Naive thymus-derived CD4-positive, alpha-beta T cell (primary cell): ENCODE measurements at regions of chr5 and their contacts with region 1.

Region 1: DNA sequence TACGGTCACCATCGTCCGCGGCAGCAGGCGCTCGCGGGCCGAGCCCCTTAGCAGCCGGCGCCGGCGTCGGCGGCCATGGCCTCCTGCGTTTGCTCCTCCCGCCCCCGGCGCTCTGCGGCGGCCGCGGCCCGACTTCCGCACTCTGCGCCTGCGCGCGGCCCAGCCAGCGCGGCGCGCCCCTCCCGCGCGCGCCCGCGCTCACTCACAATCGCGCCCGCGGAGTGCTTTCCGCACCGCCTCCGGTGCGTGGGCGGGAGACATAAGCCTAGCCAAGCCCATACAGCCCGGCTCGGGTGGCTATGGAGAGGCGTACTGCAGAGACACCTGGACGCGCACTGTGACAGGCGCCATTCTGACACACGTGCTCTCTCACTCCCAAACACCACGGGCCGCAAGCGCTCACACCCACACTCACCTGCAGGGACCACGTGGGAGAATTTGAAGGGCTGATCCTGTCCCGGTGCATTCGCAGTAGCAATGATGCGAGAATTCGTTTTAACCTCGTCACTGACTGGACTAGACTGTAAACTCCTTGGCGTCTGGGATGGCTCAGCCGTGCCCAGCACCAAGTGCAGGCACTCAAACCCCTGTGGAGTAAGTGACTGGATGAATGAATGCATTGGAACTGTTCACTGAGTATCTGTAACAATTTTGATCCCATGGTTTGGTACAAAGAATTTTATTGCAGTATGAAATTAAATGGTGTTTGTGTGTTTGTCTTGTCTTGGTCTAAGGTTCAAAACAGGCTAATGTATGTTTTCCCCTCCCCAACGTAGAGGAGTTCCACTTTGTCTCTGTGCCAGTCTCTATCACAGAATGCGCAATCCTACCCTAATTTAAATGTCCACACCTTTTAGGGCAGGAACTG is at the start of gene RNF145:
- DNase-seq: peak; percentile 93 to 96 (median 94)
- ATAC-seq: peak; percentile 89
- H3K4me3 ChIP-seq: peak within 1 kb of the TSS; percentile 90
- H3K4me3 Mint-ChIP-seq: peak within 1 kb of the TSS; percentile 95 to 99 (median 96)
- H3K27ac ChIP-seq: peak within 1 kb of the TSS; percentile 88
- H3K27ac Mint-ChIP-seq: peak within 1 kb of the TSS; percentile 91 to 99 (median 97)
- H3K4me1 ChIP-seq: peaks cover 17 to 31% of the 10 kb centered on the region in 2 donors
- H3K4me1 Mint-ChIP-seq: peaks cover 44 to 64% (median 54%) of the 10 kb centered on the region in 7 donors
- H3K27me3 ChIP-seq: no peaks in the 10 kb centered on the region
- H3K27me3 Mint-ChIP-seq: no peaks in the 10 kb centered on the region
- total RNA-seq, gene RNF145: 51.8 to 142 (median 70.6) TPM

Region 2: GRCh38 chr5:157858527-157859226 is 1351.0 kb before region 1 on chr5 and contains the start of gene CLINT1:
- CTCF ChIA-PET with region 1: no interaction called
- POLR2A ChIA-PET with region 1: interaction called, 3 read pairs
- intact Hi-C with region 1: loop called (anchors 2 kb)
- DNase-seq: peak; percentile 78 to 86 (median 84)
- ATAC-seq: peak; percentile 96
- H3K4me3 ChIP-seq: peak within 1 kb of the TSS; percentile 96
- H3K4me3 Mint-ChIP-seq: peak within 1 kb of the TSS; percentile 88 to 99 (median 96)
- H3K27ac ChIP-seq: peak within 1 kb of the TSS; percentile 85
- H3K27ac Mint-ChIP-seq: peak within 1 kb of the TSS; percentile 94 to 99 (median 96)
- H3K4me1 ChIP-seq: peaks cover 7 to 13% of the 10 kb centered on the region in 2 donors
- H3K4me1 Mint-ChIP-seq: peaks cover 51 to 83% (median 78%) of the 10 kb centered on the region in 7 donors
- H3K27me3 ChIP-seq: no peaks in the 10 kb centered on the region
- H3K27me3 Mint-ChIP-seq: no peaks in the 10 kb centered on the region
- total RNA-seq, gene CLINT1: 58.8 to 94.2 (median 74.0) TPM

Region 3: DNA sequence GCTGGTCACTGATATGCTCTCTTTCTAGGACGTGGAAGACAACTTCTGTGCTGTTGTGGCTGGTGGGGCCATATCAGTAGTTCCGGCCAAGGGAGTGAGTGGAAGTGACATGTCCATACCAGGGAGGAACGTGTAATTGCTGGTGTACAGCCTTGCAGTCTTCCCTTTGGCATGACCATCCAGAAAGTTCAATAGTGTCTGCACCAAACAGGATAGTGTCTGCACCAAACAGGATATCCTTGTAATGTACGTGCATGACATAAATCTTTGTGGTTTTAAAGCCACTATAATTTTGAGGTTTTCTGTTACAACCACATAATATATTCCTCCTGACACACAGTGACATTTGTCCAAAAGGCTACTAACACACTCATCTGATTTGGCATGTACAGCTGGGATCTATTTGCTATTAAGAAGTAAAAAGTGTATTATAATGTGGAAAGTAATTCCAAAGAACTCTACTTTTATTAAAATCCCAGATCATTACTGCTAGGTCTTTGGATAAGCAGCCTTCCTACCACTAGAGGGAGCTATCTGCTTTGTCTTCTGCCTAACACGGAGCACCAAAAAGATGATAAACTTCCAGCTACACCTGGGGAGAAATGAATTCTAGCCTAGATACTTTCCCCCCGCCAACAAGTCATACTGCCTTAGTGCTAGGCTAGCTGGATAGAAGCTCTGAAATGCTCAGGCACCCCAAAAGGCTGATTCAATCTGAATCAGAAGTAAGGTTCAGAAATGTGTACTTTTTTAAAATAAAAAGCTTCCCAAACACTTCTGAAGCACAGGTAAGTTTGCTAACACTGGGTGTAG is 53.0 kb before region 1 on chr5:
- CTCF ChIA-PET with region 1: interaction called, 8 read pairs
- POLR2A ChIA-PET with region 1: interaction called, 13 read pairs
- intact Hi-C with region 1: loop called (anchors 1 to 2 kb)
- DNase-seq: peak in 7 of 9 donors; percentile 53 to 77 (median 72)
- ATAC-seq: peak; percentile 89
- H3K4me3 ChIP-seq: no peak overlapping the region
- H3K4me3 Mint-ChIP-seq: peak overlapping the region in 1 of 10 donors; percentile 50
- H3K27ac ChIP-seq: peak overlapping the region; percentile 16
- H3K27ac Mint-ChIP-seq: peak overlapping the region; percentile 26 to 92 (median 85)
- H3K4me1 ChIP-seq: peaks cover 8 to 9% of the 10 kb centered on the region in 2 donors
- H3K4me1 Mint-ChIP-seq: peaks cover 0 to 35% (median 23%) of the 10 kb centered on the region in 7 donors
- H3K27me3 ChIP-seq: no peaks in the 10 kb centered on the region
- H3K27me3 Mint-ChIP-seq: no peaks in the 10 kb centered on the region

Region 4: GRCh38 chr5:159241946-159242552 is 32.4 kb after region 1 on chr5:
- CTCF ChIA-PET with region 1: interaction called, 3 read pairs
- POLR2A ChIA-PET with region 1: no interaction called
- intact Hi-C with region 1: loop called in 1 of 2 experiments (anchors 2 kb)
- DNase-seq: no peak
- ATAC-seq: no peak
- H3K4me3 ChIP-seq: no peak overlapping the region
- H3K4me3 Mint-ChIP-seq: peak overlapping the region in 7 of 10 donors; percentile 2 to 64 (median 32)
- H3K27ac ChIP-seq: no peak overlapping the region
- H3K27ac Mint-ChIP-seq: peak overlapping the region in 2 of 9 donors; percentile 15 to 53
- H3K4me1 ChIP-seq: peaks cover 0 to 14% of the 10 kb centered on the region in 2 donors
- H3K4me1 Mint-ChIP-seq: peaks cover 8 to 36% (median 25%) of the 10 kb centered on the region in 7 donors
- H3K27me3 ChIP-seq: no peaks in the 10 kb centered on the region
- H3K27me3 Mint-ChIP-seq: peaks cover 0 to 6% (median 4%) of the 10 kb centered on the region in 5 donors

Region 5: GRCh38 chr5:159336991-159337955 is 127.6 kb after region 1 on chr5:
- CTCF ChIA-PET with region 1: no interaction called
- POLR2A ChIA-PET with region 1: no interaction called
- intact Hi-C with region 1: loop called in 1 of 2 experiments (anchors 2 kb)
- DNase-seq: peak in 8 of 9 donors; percentile 17 to 43 (median 34)
- ATAC-seq: peak; percentile 74
- H3K4me3 ChIP-seq: no peak overlapping the region
- H3K4me3 Mint-ChIP-seq: peak overlapping the region; percentile 20 to 73 (median 55)
- H3K27ac ChIP-seq: peak overlapping the region; percentile 20
- H3K27ac Mint-ChIP-seq: peak overlapping the region; percentile 67 to 91 (median 86)
- H3K4me1 ChIP-seq: peaks cover 25 to 40% of the 10 kb centered on the region in 2 donors
- H3K4me1 Mint-ChIP-seq: peaks cover 26 to 82% (median 58%) of the 10 kb centered on the region in 7 donors
- H3K27me3 ChIP-seq: no peaks in the 10 kb centered on the region
- H3K27me3 Mint-ChIP-seq: no peaks in the 10 kb centered on the region

Region 6: DNA sequence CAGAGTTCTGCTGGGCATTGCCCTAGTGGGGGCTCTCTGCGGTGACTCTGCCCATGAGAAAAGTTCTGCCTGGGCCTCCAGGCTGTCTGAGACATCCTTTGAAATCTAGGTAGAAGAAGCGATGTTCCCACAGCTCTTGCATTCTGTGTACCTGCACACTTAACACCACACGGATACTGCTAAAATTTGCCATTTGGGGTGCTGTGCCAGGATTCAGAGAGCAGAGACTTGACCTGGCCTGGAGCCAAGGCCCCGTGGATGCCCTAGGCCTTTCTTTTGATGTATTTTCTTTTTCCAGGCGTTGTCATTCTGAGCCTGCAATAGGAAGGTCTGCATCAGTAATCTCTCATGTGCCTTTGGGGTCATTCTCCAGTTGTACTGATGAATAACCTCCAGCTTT is 209.9 kb after region 1 on chr5:
- CTCF ChIA-PET with region 1: no interaction called
- POLR2A ChIA-PET with region 1: no interaction called
- intact Hi-C with region 1: no loop called
- DNase-seq: no peak
- ATAC-seq: no peak
- H3K4me3 ChIP-seq: no peak overlapping the region
- H3K4me3 Mint-ChIP-seq: no peak overlapping the region
- H3K27ac ChIP-seq: no peak overlapping the region
- H3K27ac Mint-ChIP-seq: no peak overlapping the region
- H3K4me1 ChIP-seq: no peaks in the 10 kb centered on the region
- H3K4me1 Mint-ChIP-seq: peaks cover 0 to 9% (median 0%) of the 10 kb centered on the region in 7 donors
- H3K27me3 ChIP-seq: no peaks in the 10 kb centered on the region
- H3K27me3 Mint-ChIP-seq: peaks cover 0 to 20% (median 0%) of the 10 kb centered on the region in 5 donors

Region 7: DNA sequence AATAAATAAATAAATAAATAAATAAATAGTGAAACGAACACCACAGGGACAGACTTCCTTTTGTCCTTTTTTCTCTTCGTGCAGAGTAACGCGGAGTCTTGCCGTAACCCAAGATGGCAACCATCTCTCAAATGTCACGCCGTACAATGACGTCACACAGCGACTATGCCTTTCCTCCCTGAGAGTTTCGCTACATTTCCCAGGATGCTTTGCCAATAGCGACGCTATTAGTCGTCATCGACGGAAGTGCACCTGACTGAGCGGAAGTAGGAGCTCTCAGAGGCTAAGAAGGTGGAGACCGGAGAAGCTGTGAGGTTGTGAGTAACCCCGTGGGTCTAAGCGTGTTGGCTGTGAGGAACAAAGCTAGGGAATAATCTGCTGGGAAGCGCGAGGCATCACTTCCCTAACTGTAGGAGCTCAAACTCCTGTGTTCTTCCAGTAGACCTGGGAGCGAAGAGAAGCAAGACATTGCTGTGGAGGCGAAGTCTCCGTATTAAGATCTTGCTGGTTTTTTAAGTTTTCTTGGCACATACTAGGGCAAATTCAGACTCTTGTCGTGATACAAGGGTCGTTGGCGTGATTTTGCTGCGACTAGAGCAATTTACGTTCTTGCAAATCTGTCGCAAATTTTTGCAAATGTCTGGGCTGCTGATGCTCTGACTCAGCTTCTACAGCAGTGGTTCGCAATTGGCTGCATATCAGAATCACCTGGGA is 799.4 kb after region 1 on chr5 and contains the start of gene TTC1:
- CTCF ChIA-PET with region 1: no interaction called
- POLR2A ChIA-PET with region 1: interaction called, 8 read pairs
- intact Hi-C with region 1: loop called (anchors 1 to 2 kb)
- DNase-seq: peak; percentile 71 to 96 (median 91)
- ATAC-seq: peak; percentile 99
- H3K4me3 ChIP-seq: peak within 1 kb of the TSS; percentile 84
- H3K4me3 Mint-ChIP-seq: peak within 1 kb of the TSS; percentile 93 to 99 (median 96)
- H3K27ac ChIP-seq: peak within 1 kb of the TSS; percentile 85
- H3K27ac Mint-ChIP-seq: peak within 1 kb of the TSS; percentile 91 to 99 (median 97)
- H3K4me1 ChIP-seq: peaks cover 9 to 13% of the 10 kb centered on the region in 2 donors
- H3K4me1 Mint-ChIP-seq: peaks cover 19 to 40% (median 31%) of the 10 kb centered on the region in 7 donors
- H3K27me3 ChIP-seq: no peaks in the 10 kb centered on the region
- H3K27me3 Mint-ChIP-seq: peaks cover 0 to 3% (median 0%) of the 10 kb centered on the region in 5 donors
- total RNA-seq, gene TTC1: 24.3 to 56.5 (median 41.7) TPM